A549 (cell line): ENCODE measurements at regions of chr7 and their contacts with region 1.

Region 1: DNA sequence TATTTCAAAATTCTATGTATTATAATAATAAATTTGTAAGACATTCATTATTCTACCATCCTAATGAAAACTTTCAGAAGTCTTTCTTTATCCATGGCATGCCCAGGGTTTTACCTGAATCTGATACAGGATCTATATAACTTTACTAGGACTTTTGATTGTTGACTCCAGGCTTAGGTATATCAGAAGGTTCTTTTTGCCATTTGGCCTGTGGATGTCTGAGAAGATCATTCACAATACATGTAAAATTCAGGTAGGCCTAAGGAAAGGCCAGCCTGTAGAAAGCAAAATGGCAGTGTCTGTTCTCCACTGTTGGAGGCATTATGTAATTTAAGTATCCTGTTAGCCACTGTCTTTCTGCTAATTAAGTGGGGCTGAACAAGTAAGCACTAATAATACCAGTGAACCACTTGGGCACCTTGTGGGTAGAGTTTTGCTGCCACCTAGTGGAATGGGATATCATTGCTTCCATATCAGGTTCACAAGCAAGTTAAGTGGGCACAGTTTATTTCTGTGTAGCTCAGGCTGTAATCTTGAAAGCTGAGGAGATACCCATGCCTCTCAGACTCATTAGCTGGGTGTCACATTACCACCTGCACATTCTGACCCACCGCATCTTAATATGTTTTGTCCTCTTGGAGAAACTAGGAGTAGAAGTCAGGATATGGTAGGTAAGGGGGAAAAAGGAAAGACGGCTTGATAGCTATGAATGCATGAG is 105.5 kb downstream of the SEPTIN7 start:
- DNase-seq: peak; percentile 38 to 84
- ATAC-seq: peak; percentile 93 to 96; a peak in 5 of 6 replicates
- H3K4me3 ChIP-seq: no peak overlapping the region
- H3K27ac ChIP-seq: no peak overlapping the region
- H3K4me1 ChIP-seq: no peaks in the 10 kb centered on the region
- CTCF ChIP-seq: peak; percentile 95
- EP300 ChIP-seq: no peak
- POLR2A ChIP-seq: no peak
- RAD21 ChIP-seq: peak; percentile 91 to 92

Region 2: GRCh38 chr7:35694781-35695472 is 211.4 kb before region 1 on chr7 and contains the start of gene HERPUD2:
- CTCF ChIA-PET with region 1: interaction called, 14 read pairs
- POLR2A ChIA-PET with region 1: no interaction called
- DNase-seq: peak; percentile 87 to 95
- ATAC-seq: peak; percentile 96
- H3K4me3 ChIP-seq: peak within 1 kb of the TSS; percentile 100
- H3K27ac ChIP-seq: peak within 1 kb of the TSS; percentile 98 to 100
- H3K4me1 ChIP-seq: peaks cover 49% of the 10 kb centered on the region
- CTCF ChIP-seq: no peak
- EP300 ChIP-seq: no peak
- POLR2A ChIP-seq: peak; percentile 84
- RAD21 ChIP-seq: no peak
- polyA plus RNA-seq, gene HERPUD2: 34.8 and 47.8 TPM in 2 replicates

Region 3: GRCh38 chr7:35707422-35707821 is 198.9 kb before region 1 on chr7:
- CTCF ChIA-PET with region 1: interaction called, 81 read pairs
- POLR2A ChIA-PET with region 1: no interaction called
- DNase-seq: no peak
- ATAC-seq: no peak
- H3K4me3 ChIP-seq: no peak overlapping the region
- H3K27ac ChIP-seq: no peak overlapping the region
- H3K4me1 ChIP-seq: peaks cover 3% of the 10 kb centered on the region; the same call in 1 of the 3 replicates
- CTCF ChIP-seq: no peak
- EP300 ChIP-seq: no peak
- POLR2A ChIP-seq: no peak
- RAD21 ChIP-seq: no peak

Region 4: DNA sequence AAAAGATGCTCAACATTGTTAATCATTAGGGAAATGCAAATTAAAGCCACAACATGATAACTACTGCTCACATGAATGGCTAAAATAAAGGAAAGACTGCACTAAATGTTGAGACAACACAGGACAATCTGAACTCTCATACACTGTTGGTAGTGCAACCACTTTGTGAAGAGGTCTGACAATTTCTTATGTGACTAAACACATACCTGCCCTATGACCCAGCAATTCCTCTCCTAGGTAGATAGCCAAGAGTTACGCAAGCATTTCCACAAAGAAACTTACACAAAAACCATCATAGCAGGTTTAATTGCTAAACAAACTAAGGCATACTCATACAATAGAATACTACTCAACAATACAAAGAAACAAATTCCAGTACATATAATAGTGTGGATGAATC is 169.6 kb before region 1 on chr7:
- CTCF ChIA-PET with region 1: no interaction called
- POLR2A ChIA-PET with region 1: no interaction called
- DNase-seq: peak in 1 of 2 experiments; percentile 23
- ATAC-seq: 0 out of 6 replicates have a peak, but pooled peaks of 1 of the 2 experiments have one; percentile 33
- H3K4me3 ChIP-seq: no peak overlapping the region
- H3K27ac ChIP-seq: no peak overlapping the region
- H3K4me1 ChIP-seq: no peaks in the 10 kb centered on the region
- CTCF ChIP-seq: no peak
- EP300 ChIP-seq: no peak
- POLR2A ChIP-seq: no peak
- RAD21 ChIP-seq: no peak

Region 5: GRCh38 chr7:36280840-36281812 is 374.8 kb after region 1 on chr7:
- CTCF ChIA-PET with region 1: no interaction called
- POLR2A ChIA-PET with region 1: no interaction called
- DNase-seq: peak; percentile 76 to 85
- ATAC-seq: peak; percentile 91 to 92
- H3K4me3 ChIP-seq: peak overlapping the region; percentile 39
- H3K27ac ChIP-seq: peak overlapping the region; percentile 94 to 95
- H3K4me1 ChIP-seq: peaks cover 70% of the 10 kb centered on the region
- CTCF ChIP-seq: no peak
- EP300 ChIP-seq: 0 out of 5 replicates have a peak, but pooled peaks of 1 of the 2 experiments have one; percentile 35
- POLR2A ChIP-seq: no peak
- RAD21 ChIP-seq: peak in 1 of 2 experiments; percentile 38; a peak in 1 of 5 replicates